Activated T-helper 2 cell treated with anti-CD3 and anti-CD28 coated beads, Interferon-gamma antibody, Interleukin-2, Interleukin-4, amounts not matched to agents 10 μg/mL and 5 μg/mL and 100 μg/mL, durations not matched to agents 14 hours and 24 hours and 36 hours (primary cell): ENCODE measurements at regions of chr12 and their contacts with region 1.

Region 1: DNA sequence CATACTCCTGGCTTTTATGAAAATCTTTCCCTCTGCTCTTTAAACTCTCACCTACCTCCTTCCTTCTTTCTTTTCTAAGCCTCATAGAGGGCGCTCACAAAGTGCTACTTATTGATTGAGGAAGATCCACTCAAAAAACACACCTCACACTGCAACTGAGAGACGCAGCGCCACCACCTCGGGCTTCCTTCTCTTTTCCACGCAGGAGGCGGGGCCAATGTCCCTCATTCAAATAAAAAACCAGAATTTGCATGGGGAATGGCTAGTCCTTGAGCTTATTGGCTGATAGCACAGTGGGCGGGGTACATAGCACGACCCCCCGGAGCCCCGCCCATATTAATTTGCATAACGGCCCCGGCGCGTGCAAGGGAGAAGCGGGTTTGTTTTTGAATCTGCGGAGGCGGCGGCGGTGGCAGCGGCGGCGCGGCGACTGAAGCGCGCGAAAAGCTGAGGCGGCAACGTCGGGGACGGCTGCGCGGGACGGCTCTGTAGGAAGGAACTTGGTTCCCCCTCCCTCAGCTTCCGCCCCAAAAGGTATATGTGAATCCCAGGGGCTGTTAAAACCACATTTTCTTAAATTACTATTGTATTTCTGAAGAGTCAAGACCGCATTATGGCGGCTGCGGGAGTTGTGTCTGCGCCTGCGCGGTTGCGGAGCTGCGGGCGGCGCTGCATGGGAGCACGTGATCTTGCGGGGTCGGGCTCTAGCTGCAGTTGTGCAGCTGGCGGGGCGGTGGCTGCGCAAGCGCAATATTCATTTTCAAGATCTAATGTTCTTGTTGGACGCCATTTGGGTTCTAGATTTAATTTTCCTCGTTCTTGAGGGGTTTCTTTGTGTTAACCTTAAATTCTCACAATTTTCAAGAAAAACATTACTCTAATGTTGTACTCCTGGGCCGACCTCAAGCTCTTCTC is at the start of gene ATF7IP:
- DNase-seq: peak; percentile 96
- H3K4me3 Mint-ChIP-seq: peak within 1 kb of the TSS; percentile 88
- H3K27ac Mint-ChIP-seq: peak within 1 kb of the TSS; percentile 96
- H3K4me1 Mint-ChIP-seq: peaks cover 32% of the 10 kb centered on the region
- H3K27me3 Mint-ChIP-seq: no peaks in the 10 kb centered on the region
- total RNA-seq, gene ATF7IP: 81.2 and 82.1 TPM in 2 replicates

Region 2: GRCh38 chr12:14216405-14217294 is 148.9 kb before region 1 on chr12:
- intact Hi-C with region 1: loop called (anchors 1 kb)
- DNase-seq: no peak
- H3K4me3 Mint-ChIP-seq: no peak overlapping the region
- H3K27ac Mint-ChIP-seq: peak overlapping the region; percentile 15
- H3K4me1 Mint-ChIP-seq: peaks cover 17% of the 10 kb centered on the region
- H3K27me3 Mint-ChIP-seq: peaks cover 4% of the 10 kb centered on the region

Region 3: GRCh38 chr12:14257734-14258574 is 107.6 kb before region 1 on chr12:
- intact Hi-C with region 1: loop called (anchors 1 kb)
- DNase-seq: peak; percentile 84
- H3K4me3 Mint-ChIP-seq: peak overlapping the region; percentile 60
- H3K27ac Mint-ChIP-seq: peak overlapping the region; percentile 95
- H3K4me1 Mint-ChIP-seq: peaks cover 48% of the 10 kb centered on the region
- H3K27me3 Mint-ChIP-seq: no peaks in the 10 kb centered on the region

Region 4: GRCh38 chr12:14340371-14340770 is 25.2 kb before region 1 on chr12:
- intact Hi-C with region 1: no loop called
- DNase-seq: no peak
- H3K4me3 Mint-ChIP-seq: no peak overlapping the region
- H3K27ac Mint-ChIP-seq: no peak overlapping the region
- H3K4me1 Mint-ChIP-seq: no peaks in the 10 kb centered on the region
- H3K27me3 Mint-ChIP-seq: no peaks in the 10 kb centered on the region

Region 5: GRCh38 chr12:14394317-14395073 is 28.9 kb after region 1 on chr12:
- intact Hi-C with region 1: loop called (anchors 1 kb)
- DNase-seq: peak; percentile 42
- H3K4me3 Mint-ChIP-seq: peak overlapping the region; percentile 89
- H3K27ac Mint-ChIP-seq: peak overlapping the region; percentile 92
- H3K4me1 Mint-ChIP-seq: peaks cover 67% of the 10 kb centered on the region
- H3K27me3 Mint-ChIP-seq: no peaks in the 10 kb centered on the region

Region 6: DNA sequence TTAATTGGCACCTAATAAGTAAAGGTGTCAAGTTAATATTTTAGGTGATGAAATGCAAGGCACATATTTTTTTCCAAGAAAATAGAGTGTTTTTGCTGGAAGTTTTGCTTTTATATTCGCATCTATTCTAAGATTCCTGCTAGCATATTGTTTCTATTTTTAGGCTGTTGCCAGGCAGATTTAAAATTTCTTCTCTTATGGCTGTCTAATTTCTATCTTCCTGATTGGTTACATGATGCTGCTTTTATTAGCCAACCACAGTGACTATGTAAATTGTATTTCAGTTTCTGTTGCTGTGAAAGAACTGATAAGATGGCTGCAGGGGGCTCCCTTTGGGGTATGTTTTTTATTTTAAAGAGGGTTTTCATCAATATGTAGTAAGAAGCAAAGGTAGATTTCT is 42.7 kb after region 1 on chr12:
- intact Hi-C with region 1: no loop called
- DNase-seq: no peak
- H3K4me3 Mint-ChIP-seq: no peak overlapping the region
- H3K27ac Mint-ChIP-seq: peak overlapping the region; percentile 46
- H3K4me1 Mint-ChIP-seq: peaks cover 50% of the 10 kb centered on the region
- H3K27me3 Mint-ChIP-seq: no peaks in the 10 kb centered on the region

Region 7: DNA sequence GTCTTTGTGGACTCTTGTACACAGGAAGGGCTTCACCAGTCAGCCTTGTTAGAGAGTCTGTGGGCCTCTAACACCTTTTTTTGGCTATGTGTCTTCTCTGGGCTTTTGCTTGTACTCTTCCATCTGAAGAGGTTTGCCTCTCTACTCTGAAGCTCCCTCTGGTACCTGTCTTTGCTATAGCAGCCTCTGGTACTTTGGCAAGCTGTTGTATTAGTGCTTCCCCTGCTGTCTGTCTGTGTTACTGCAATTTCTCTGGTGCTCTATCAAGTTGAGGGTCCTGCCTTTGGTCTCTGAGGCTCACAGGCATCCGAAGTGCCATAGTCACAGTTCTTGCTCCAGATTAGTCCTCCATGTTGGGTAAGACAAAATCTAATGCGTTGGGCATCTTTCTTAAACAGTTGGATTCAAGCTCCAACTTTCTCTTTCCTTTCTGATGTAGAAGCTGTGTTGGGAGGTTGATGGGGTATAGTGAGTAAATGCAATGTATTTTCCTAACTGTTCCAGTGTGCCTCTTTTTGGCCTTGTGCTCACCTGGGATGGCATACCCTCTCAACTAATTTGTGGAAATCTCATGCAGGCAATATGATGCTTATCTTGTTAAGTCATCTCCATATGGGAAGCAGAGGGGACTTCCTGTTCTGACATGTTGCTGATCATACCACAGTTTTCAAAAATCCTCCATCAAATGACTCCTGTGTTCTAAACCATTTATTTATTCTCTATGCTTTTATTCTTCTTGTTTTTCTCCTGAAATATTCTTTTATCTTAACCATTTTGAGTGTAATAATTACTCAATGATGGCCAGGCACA is 88.8 kb after region 1 on chr12:
- intact Hi-C with region 1: loop called (anchors 2 kb)
- DNase-seq: peak; percentile 28
- H3K4me3 Mint-ChIP-seq: no peak overlapping the region
- H3K27ac Mint-ChIP-seq: peak overlapping the region; percentile 83
- H3K4me1 Mint-ChIP-seq: peaks cover 49% of the 10 kb centered on the region
- H3K27me3 Mint-ChIP-seq: no peaks in the 10 kb centered on the region

Region 8: GRCh38 chr12:14948672-14949071 is 583.1 kb after region 1 on chr12:
- intact Hi-C with region 1: loop called (anchors 5 kb)
- DNase-seq: peak; percentile 62
- H3K4me3 Mint-ChIP-seq: peak overlapping the region; percentile 73
- H3K27ac Mint-ChIP-seq: peak overlapping the region; percentile 98
- H3K4me1 Mint-ChIP-seq: peaks cover 71% of the 10 kb centered on the region
- H3K27me3 Mint-ChIP-seq: no peaks in the 10 kb centered on the region